Activated naive CD8-positive, alpha-beta T cell treated with anti-CD3 and anti-CD28 coated beads, Interleukin-2, amount 10 ng/mL, durations not matched to agents 7 days and 5 days (primary cell): ENCODE measurements at regions of chr2 and their contacts with region 1.

Region 1: DNA sequence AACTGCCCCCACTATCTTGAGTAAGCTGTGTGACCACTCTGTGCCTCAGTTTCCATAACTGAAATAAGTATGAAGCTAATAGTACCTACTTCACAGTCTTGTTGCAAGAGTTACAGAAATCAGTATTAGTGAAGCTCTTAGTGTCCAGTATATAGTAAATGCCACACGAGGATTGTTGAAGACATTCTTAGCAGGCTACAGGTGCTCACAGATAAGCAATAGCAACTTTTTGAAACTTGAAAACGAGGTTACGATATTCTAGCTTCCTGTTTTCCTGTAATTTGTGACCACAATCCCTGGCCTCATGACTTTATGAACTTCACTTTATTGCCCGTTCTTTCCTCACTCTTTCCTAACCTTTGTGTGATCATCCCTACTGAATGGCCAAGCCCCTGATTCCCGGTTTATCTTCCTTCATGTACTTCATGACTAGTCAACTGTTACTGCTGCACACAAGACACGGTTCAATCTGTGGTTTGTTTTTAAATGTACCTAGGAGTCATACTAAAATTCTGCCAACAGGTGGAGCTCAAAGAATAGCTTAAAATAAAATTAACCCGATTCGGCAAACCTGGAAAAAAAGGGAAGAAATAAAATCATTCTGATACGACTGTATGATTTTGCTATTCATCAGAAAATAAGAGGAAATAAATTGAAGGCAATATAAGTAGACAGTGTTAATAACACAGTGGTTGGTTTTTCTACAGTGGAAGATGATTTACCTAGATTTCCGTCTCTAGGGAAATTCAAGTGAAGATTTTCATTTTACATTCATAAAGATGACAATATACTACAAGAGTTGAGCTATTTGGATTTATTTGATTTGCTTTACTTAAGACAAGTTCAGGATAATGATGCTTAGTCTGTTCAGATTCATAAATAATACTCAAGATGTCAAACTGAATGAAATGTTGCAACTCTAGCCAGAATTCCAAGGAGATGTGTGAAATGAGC is 38.1 kb upstream of the STAT1 start:
- DNase-seq: no peak
- ATAC-seq: peak; percentile 48
- H3K4me3 Mint-ChIP-seq: no peak overlapping the region
- H3K27ac Mint-ChIP-seq: no peak overlapping the region
- H3K4me1 Mint-ChIP-seq: peaks cover 20% of the 10 kb centered on the region
- H3K27me3 Mint-ChIP-seq: no peaks in the 10 kb centered on the region

Region 2: DNA sequence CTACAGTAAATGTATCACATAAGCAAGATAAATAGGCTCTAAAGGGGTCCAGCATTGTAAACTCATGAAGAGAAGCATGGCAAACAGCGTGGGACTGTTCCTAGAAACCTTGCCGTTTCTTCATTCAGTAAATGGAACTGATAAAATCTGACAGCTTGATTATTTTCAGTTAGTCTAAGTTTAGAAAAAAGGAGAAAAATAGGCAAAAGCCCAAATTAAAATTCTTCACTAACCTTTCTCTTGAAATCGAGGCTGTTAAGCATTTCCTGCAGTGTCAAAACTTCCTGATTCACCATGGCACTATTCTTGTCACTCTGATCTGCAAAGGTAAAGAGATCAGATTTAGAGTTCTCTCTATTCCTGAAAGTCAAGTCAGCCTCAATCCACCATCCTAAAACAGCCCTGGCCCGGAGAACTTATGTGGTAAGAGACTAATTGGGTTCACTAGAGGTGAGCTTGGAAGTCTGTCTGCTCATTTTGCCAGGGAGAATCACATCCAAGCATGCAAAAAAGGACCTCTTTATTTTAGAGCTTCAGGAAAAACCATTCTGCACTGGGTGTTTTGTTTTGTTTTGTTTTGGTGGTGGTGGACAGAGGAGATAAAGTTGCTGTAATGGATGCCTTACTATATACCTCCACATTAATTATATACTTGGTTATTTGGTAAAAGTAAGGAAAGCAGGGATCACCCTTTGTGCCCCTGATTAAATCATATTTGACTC is 14.3 kb after region 1 on chr2:
- POLR2A ChIA-PET with region 1: interaction called, 21 read pairs
- DNase-seq: no peak
- ATAC-seq: peak; percentile 27
- H3K4me3 Mint-ChIP-seq: peak overlapping the region; percentile 88
- H3K27ac Mint-ChIP-seq: peak overlapping the region; percentile 92
- H3K4me1 Mint-ChIP-seq: peaks cover 64% of the 10 kb centered on the region
- H3K27me3 Mint-ChIP-seq: no peaks in the 10 kb centered on the region

Region 3: DNA sequence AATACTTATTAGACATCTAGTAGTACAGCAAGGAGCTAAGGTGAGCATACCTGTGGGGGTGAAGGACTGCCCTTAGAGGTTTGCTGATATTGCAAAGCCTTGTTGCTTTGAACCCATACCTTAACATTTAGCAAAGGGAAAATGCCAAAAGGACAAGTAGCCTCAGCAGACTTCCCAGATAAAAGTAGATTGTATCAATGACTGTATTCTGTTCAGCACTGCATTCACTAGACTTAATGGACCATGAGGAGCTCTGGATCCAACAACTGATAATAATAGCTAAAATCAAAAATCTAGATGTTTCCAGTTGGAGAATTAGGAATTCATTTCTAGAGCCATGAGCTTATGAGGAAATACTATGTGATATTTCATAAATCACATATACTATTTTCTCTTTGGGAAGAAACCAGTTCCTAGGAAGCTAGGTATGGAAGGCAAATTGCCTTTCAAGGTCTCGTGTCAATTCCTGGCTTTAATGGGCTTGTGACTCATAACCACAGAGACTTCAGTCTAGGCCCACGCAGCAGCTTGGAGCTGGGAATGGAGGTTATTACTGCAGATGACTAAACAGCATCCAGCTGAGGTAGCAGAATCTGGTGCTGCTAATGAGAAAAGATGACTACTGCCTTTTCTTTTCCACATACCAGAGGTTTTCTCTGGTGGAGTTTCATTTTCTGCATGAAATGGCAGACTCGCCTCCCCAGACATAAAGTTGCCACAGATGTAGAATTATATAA is 434.6 kb after region 1 on chr2:
- POLR2A ChIA-PET with region 1: no interaction called
- DNase-seq: no peak
- ATAC-seq: no peak
- H3K4me3 Mint-ChIP-seq: no peak overlapping the region
- H3K27ac Mint-ChIP-seq: no peak overlapping the region
- H3K4me1 Mint-ChIP-seq: no peaks in the 10 kb centered on the region
- H3K27me3 Mint-ChIP-seq: peaks cover 13% of the 10 kb centered on the region